HepG2 (cell line): ENCODE measurements at regions of chr6 and their contacts with region 1.

Region 1: GRCh38 chr6:158799051-158799792 is 19.9 kb downstream of the EZR start:
- DNase-seq: peak; percentile 72
- ATAC-seq: peak; percentile 85
- H3K4me3 ChIP-seq: no peak overlapping the region
- H3K27ac ChIP-seq: peak overlapping the region; percentile 52
- H3K4me1 ChIP-seq: peaks cover 71% of the 10 kb centered on the region
- H3K27me3 ChIP-seq: no peaks in the 10 kb centered on the region
- CTCF ChIP-seq: peak; percentile 70
- EP300 ChIP-seq: peak in 1 of 2 experiments; percentile 46; a peak in 1 of 4 replicates
- POLR2A ChIP-seq: no peak
- RAD21 ChIP-seq: peak; percentile 57; the same call in 1 of the 2 replicates

Region 2: GRCh38 chr6:158737710-158738615 is 61.3 kb before region 1 on chr6:
- CTCF ChIA-PET with region 1: no interaction called
- POLR2A ChIA-PET with region 1: no interaction called
- in situ Hi-C with region 1: no loop called
- intact Hi-C with region 1: no loop called
- DNase-seq: no peak
- ATAC-seq: peak; percentile 66
- H3K4me3 ChIP-seq: no peak overlapping the region
- H3K27ac ChIP-seq: no peak overlapping the region
- H3K4me1 ChIP-seq: no peaks in the 10 kb centered on the region
- H3K27me3 ChIP-seq: peaks cover 2 to 11% of the 10 kb centered on the region in 2 experiments; a peak in 3 of 5 replicates
- CTCF ChIP-seq: no peak
- EP300 ChIP-seq: no peak
- POLR2A ChIP-seq: no peak
- RAD21 ChIP-seq: no peak

Region 3: GRCh38 chr6:158819213-158819909 is 20.1 kb after region 1 on chr6 and contains the start of gene EZR:
- CTCF ChIA-PET with region 1: no interaction called
- POLR2A ChIA-PET with region 1: interaction called, 4 read pairs
- in situ Hi-C with region 1: no loop called
- intact Hi-C with region 1: loop called (anchors 2 kb)
- DNase-seq: peak; percentile 59
- ATAC-seq: peak; percentile 56
- H3K4me3 ChIP-seq: peak within 1 kb of the TSS; percentile 70 to 87 (median 81)
- H3K27ac ChIP-seq: peak within 1 kb of the TSS; percentile 50
- H3K4me1 ChIP-seq: peaks cover 47% of the 10 kb centered on the region
- H3K27me3 ChIP-seq: no peaks in the 10 kb centered on the region; a peak in 1 of 5 replicates
- CTCF ChIP-seq: peak; percentile 45
- EP300 ChIP-seq: no peak
- POLR2A ChIP-seq: peak; percentile 64 to 83
- RAD21 ChIP-seq: peak; percentile 16; the same call in 1 of the 2 replicates
- total RNA-seq, gene EZR: 60.3 and 75.7 TPM in 2 replicates